ENCODE measurements at regions of chr11 and their contacts with region 1.

Region 1: DNA sequence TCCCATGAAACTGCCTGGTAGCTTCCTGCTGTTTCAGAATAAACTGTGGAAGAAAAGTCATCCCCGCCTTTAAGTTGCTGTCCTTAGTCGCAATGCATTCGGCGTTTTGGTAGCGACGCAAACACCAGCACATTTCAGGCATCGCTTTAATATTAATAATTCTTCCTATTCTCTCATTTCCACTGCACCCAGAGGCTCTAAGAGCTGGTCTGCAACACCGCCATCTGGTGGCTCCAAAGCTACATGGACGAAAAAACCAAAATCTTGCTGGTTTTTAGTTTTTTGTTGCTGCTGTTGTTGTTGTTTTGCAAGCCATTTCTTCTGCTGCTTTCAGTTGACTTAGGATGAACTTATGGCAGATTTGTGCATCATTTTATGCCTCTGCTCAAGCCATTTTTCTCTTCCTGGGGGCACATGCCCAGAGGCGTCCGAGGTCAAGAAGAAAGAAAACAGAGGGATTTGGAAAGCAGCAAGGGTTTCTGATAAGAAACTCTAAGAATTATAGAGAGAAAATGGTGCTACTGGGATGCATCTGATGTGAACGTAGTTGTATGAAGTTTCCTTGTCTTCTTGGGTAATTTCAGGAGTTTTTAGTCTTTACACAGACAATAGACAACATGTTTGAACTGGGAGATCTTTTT is 345.4 kb upstream of the KIRREL3 start:
- DNase-seq: peak in 8 of 10 donors; percentile 24 to 55 (median 46)
- H3K4me3 ChIP-seq: peak overlapping the region in 4 of 59 donors; percentile 6 to 26 (median 10)
- H3K27ac ChIP-seq: no peak overlapping the region
- H3K27me3 ChIP-seq: no peaks in the 10 kb centered on the region
- CTCF ChIP-seq: peak; percentile 60 to 91 (median 80)

Region 2: DNA sequence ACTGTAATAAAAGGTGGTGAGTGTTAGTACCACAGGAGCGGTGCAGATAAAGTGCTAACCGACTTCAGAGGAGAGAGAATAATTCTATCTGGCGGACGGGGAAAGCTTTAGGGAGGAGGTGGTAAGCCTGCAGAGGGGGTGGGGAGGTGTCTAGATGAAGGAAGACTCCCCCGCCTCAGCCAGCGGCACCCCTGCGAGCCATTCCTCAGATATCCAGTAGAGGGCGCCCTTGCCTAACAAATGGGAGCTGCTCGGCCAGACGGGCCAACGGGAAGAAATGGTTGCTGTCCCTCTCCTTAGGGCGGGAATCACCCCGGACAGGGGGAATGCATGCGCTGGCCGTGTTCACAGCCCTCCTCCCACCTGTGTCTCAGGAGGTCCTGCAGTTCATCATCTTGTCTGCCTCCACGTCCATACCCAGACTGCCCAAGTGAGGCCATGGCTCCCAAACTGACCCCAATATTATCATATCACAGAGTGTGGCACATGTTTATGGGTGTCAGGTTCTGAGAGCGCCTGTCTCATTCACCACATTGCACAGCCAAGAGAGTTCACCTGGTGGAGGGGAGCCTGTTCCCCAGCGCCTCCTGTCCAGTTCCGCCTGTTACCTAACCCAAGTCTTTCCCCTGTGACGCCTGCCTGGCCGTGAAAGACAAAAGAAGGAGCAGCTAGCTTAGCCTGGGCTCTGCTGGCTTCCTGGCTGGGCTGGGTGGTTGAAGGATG is 905.0 kb before region 1 on chr11:
- intact Hi-C with region 1: loop called in 1 of 2 experiments (anchors 5 kb)
- DNase-seq: peak; percentile 67 to 89 (median 81)
- H3K4me3 ChIP-seq: peak overlapping the region in 3 of 59 donors; percentile 2 to 18 (median 16)
- H3K27ac ChIP-seq: peak overlapping the region in 6 of 59 donors; percentile 9 to 65 (median 30)
- H3K27me3 ChIP-seq: no peaks in the 10 kb centered on the region
- CTCF ChIP-seq: peak; percentile 90 to 99 (median 98)

Region 3: DNA sequence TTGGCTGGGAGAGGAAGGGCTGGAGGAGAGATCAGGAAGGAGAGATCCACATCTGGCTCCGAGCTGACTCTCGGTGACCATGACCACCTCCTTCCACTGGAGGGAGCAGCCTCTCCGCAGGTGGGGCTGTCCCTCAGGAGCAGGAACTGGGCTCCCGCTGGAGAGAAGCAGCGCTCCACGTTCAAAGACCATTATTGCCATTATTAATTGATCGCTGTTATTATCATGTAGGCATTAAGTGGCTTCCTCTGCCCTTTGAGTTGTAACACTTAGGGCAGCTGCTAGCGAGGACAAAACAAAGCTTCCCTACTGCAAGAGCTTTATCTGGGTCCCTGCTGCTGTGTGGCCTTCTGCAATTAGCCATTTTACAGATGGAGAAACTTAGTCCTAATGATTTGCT is 738.6 kb before region 1 on chr11:
- intact Hi-C with region 1: loop called in 1 of 2 experiments (anchors 10 kb)
- DNase-seq: peak in 9 of 10 donors; percentile 63 to 83 (median 75)
- H3K4me3 ChIP-seq: peak overlapping the region in 2 of 59 donors; percentile 20 to 32
- H3K27ac ChIP-seq: peak overlapping the region in 19 of 59 donors; percentile 4 to 70 (median 21)
- H3K27me3 ChIP-seq: no peaks in the 10 kb centered on the region
- CTCF ChIP-seq: peak; percentile 26 to 92 (median 83)

Region 4: DNA sequence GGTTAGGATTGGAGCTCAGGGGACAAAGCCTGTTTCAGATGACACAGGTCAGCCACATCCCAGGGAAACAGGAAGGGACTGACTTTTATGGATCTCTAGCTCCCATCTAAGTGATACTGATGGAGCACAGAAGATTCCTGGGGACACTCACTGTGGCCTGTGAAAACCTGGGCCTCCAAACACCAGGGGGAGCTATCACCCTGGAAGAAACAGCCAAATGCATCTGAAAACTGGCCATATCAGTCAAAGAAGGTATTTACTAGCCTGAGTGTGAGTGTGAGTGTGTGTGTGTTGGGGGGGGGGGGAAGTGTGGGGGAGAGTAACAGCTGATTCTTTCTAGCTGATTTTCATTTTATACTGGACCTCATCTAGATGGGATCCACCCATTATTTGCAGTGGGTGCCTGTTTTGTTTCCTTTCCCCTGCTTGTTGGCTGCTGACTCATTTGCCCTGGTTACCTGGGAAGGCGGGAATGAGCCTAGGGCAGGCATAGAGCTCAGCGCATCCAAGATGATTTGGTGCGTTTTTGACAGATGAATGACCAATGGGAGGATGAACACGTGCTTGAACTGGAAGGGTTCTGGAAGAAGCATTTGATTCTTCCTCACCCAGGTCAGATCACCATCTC is 629.4 kb before region 1 on chr11:
- intact Hi-C with region 1: loop called in 1 of 2 experiments (anchors 5 kb)
- DNase-seq: peak in 7 of 10 donors; percentile 37 to 80 (median 63)
- H3K4me3 ChIP-seq: no peak overlapping the region
- H3K27ac ChIP-seq: peak overlapping the region in 9 of 59 donors; percentile 1 to 61 (median 35)
- H3K27me3 ChIP-seq: no peaks in the 10 kb centered on the region
- CTCF ChIP-seq: peak; percentile 11 to 81 (median 66)

Region 5: DNA sequence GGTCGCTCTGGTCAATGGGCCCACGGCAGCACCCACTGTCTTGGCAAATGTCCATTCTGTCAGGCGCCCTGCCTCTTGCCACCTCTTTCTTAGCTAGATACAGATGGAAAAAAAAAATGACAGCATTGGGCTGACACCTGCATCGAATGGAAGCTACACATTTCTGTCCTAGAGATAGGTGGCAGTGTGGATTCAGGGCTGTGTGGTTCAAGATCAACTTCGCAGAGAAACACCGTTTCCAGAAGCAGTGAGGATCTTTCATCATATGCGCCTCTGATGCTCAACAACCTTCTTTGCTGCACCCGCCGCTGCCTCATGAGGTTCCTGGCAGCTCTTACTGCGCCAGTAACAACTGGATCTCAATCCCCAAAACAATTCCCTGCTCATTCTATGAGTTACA is 581.7 kb before region 1 on chr11:
- intact Hi-C with region 1: loop called in 1 of 2 experiments (anchors 10 kb)
- DNase-seq: no peak
- H3K4me3 ChIP-seq: no peak overlapping the region
- H3K27ac ChIP-seq: no peak overlapping the region
- H3K27me3 ChIP-seq: no peaks in the 10 kb centered on the region
- CTCF ChIP-seq: peak in 41 of 56 donors; percentile 8 to 54 (median 32)

Region 6: GRCh38 chr11:127003260-127003981 is 342.5 kb before region 1 on chr11:
- intact Hi-C with region 1: loop called in 1 of 2 experiments (anchors 5 kb)
- DNase-seq: peak in 8 of 10 donors; percentile 39 to 80 (median 56)
- H3K4me3 ChIP-seq: peak overlapping the region; percentile 37 to 83 (median 61)
- H3K27ac ChIP-seq: peak overlapping the region in 31 of 59 donors; percentile 0 to 88 (median 48)
- H3K27me3 ChIP-seq: peaks cover 0 to 19% (median 0%) of the 10 kb centered on the region in 45 donors
- CTCF ChIP-seq: peak in 54 of 56 donors; percentile 24 to 68 (median 50)

Region 7: GRCh38 chr11:127383026-127383425 is 37.1 kb after region 1 on chr11:
- intact Hi-C with region 1: no loop called
- DNase-seq: no peak
- H3K4me3 ChIP-seq: no peak overlapping the region
- H3K27ac ChIP-seq: no peak overlapping the region
- H3K27me3 ChIP-seq: peaks cover 0 to 32% (median 0%) of the 10 kb centered on the region in 45 donors
- CTCF ChIP-seq: no peak